ENCODE measurements at regions of chr3 and their contacts with region 1.

Region 1: DNA sequence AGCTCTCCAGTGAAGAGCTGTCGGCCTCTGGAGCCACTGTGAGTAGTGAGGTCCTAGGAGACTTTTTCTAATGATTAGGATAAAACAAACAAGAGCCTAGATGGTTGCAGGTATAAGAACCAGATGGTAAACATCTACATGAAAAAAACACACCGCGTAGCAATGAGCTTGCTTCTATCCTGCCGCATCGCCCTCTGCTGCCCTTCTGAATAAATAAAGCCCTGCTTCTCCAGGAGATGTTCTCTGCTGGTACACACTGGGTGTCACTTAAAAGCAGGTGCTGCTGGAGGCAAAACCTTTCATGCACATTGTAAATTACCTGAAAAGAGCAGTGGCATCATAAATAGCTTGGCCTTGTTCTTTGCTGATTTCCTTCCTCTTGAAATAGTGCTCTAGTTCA is 164.4 kb upstream of the TOPAZ1 start:
- DNase-seq: no peak
- ATAC-seq: no peak
- H3K4me3 Mint-ChIP-seq: no peak overlapping the region
- H3K27ac Mint-ChIP-seq: no peak overlapping the region
- H3K4me1 Mint-ChIP-seq: peaks cover 3% of the 10 kb centered on the region
- H3K27me3 Mint-ChIP-seq: no peaks in the 10 kb centered on the region
- CTCF ChIP-seq: no peak

Region 2: DNA sequence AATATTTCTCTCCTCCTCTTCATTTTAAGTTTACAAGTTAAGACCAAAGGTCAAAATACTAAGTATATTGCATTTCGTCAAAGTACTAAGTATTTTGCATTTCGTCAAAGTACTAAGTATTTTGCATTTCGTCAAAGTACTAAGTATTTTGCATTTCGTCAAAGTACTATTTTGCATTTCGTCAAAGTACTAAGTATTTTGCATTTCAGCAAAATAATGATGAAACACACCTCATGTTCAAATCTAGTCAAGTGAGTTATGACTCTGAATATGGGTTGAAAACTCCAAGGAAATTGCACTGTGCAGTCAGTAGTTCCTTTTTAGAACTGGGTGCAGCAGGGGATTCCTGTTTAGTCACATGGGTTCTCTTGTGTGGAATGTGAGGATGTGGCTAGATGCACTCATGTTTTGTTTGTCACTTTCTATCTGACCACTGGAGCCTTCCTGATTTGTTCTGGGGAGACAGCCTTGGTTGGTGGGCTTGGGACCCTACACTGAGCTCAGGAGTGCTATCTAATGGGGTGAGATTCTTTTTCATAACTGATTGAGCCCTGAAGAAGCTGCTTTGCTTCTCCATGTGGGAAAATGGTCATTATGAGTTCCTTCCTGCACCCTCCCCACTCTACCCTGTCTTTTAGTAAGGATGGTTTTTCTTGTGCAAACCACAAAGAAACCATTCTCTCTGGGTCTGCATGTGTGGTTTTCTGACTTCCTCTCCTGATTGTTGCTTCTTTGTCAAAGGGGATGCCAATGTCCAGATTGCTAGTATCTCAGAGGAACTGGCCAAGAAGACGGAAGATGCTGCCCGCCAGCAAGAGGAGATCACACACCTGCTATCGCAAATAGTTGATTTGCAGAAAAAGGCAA is 1884.7 kb before region 1 on chr3:
- CTCF ChIA-PET with region 1: no interaction called
- POLR2A ChIA-PET with region 1: no interaction called
- intact Hi-C with region 1: no loop called
- DNase-seq: no peak
- ATAC-seq: peak; percentile 35
- H3K4me3 Mint-ChIP-seq: no peak overlapping the region
- H3K27ac Mint-ChIP-seq: peak overlapping the region; percentile 80
- H3K4me1 Mint-ChIP-seq: peaks cover 47% of the 10 kb centered on the region
- H3K27me3 Mint-ChIP-seq: no peaks in the 10 kb centered on the region
- CTCF ChIP-seq: no peak

Region 3: GRCh38 chr3:43733459-43734384 is 343.5 kb before region 1 on chr3:
- CTCF ChIA-PET with region 1: no interaction called
- POLR2A ChIA-PET with region 1: no interaction called
- intact Hi-C with region 1: no loop called
- DNase-seq: no peak
- ATAC-seq: no peak
- H3K4me3 Mint-ChIP-seq: no peak overlapping the region
- H3K27ac Mint-ChIP-seq: no peak overlapping the region
- H3K4me1 Mint-ChIP-seq: no peaks in the 10 kb centered on the region
- H3K27me3 Mint-ChIP-seq: no peaks in the 10 kb centered on the region
- CTCF ChIP-seq: no peak

Region 4: DNA sequence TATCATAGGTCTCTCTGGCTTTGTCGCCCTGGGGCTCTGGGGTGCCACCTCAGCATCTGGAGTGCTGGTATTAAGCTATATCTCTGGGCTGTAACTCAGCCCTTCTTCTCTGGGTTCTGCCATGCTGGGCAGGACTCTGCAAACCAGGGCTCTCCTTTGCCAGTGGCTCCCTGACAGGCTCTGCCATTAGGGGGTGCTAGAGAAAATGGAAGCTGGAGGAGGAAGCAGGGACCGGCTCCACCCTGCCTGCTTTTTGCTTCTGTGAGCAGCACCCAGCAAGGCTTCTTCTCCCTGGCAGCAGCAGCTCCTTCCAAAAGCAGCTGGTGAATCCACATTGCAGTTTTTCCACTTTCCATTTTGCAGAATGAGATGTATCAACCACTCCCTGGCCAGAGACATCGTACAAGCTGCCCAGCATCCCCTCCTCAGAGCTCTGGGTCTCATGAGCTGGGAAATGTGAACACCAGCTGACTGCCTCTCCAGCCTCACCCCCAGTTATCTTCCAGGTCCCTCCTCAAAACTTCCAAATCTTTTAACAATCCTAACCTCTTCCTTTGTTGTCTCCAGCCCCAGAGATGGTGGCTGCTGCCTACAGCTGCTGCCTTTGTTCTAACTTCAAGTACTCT is 221.5 kb before region 1 on chr3:
- CTCF ChIA-PET with region 1: interaction called, 9 read pairs
- POLR2A ChIA-PET with region 1: no interaction called
- intact Hi-C with region 1: loop called (anchors 5 kb)
- DNase-seq: no peak
- ATAC-seq: peak; percentile 71
- H3K4me3 Mint-ChIP-seq: no peak overlapping the region
- H3K27ac Mint-ChIP-seq: no peak overlapping the region
- H3K4me1 Mint-ChIP-seq: peaks cover 4% of the 10 kb centered on the region
- H3K27me3 Mint-ChIP-seq: peaks cover 63% of the 10 kb centered on the region
- CTCF ChIP-seq: no peak

Region 5: DNA sequence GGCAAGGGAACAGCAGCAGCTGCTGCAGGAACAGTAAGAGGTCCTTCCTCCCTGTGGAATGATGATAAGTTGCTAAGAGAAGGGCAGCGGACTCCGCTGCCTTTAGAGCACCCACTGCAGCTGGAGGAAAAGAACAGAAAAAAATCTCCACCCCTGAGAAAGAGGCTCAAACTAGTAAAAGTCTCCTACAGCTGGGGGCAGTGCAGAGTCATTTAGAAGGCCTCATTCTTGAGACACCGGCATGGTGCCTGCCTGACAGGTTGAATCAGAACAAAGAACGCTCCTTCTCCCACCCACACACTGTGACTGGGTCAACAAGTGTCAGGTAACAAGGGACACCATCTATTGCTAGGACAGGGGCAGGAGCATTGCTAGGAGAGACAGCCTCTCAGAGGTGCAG is 198.1 kb before region 1 on chr3:
- CTCF ChIA-PET with region 1: interaction called, 8 read pairs
- POLR2A ChIA-PET with region 1: no interaction called
- intact Hi-C with region 1: loop called (anchors 1 kb)
- DNase-seq: no peak
- ATAC-seq: no peak
- H3K4me3 Mint-ChIP-seq: no peak overlapping the region
- H3K27ac Mint-ChIP-seq: no peak overlapping the region
- H3K4me1 Mint-ChIP-seq: no peaks in the 10 kb centered on the region
- H3K27me3 Mint-ChIP-seq: peaks cover 2% of the 10 kb centered on the region
- CTCF ChIP-seq: no peak

Region 6: GRCh38 chr3:43923104-43923882 is 154.0 kb before region 1 on chr3:
- CTCF ChIA-PET with region 1: no interaction called
- POLR2A ChIA-PET with region 1: no interaction called
- intact Hi-C with region 1: no loop called
- DNase-seq: no peak
- ATAC-seq: no peak
- H3K4me3 Mint-ChIP-seq: no peak overlapping the region
- H3K27ac Mint-ChIP-seq: no peak overlapping the region
- H3K4me1 Mint-ChIP-seq: no peaks in the 10 kb centered on the region
- H3K27me3 Mint-ChIP-seq: peaks cover 48% of the 10 kb centered on the region
- CTCF ChIP-seq: no peak

Measured in activated B cell treated with CpG ODN at 0.5 μM for 24 hours (primary cell).